GM18951 (cell line): ENCODE measurements at regions of chr5 and their contacts with region 1.

Region 1: GRCh38 chr5:91101600-91102379 is 281.3 kb downstream of the ARRDC3 start:
- POLR2A ChIP-seq: no peak

Region 2: GRCh38 chr5:91219803-91220371 is 118.1 kb after region 1 on chr5:
- in situ Hi-C with region 1: loop called (anchors 10 kb)
- POLR2A ChIP-seq: no peak